ENCODE measurements at regions of chr3 and their contacts with region 1.

Region 1: DNA sequence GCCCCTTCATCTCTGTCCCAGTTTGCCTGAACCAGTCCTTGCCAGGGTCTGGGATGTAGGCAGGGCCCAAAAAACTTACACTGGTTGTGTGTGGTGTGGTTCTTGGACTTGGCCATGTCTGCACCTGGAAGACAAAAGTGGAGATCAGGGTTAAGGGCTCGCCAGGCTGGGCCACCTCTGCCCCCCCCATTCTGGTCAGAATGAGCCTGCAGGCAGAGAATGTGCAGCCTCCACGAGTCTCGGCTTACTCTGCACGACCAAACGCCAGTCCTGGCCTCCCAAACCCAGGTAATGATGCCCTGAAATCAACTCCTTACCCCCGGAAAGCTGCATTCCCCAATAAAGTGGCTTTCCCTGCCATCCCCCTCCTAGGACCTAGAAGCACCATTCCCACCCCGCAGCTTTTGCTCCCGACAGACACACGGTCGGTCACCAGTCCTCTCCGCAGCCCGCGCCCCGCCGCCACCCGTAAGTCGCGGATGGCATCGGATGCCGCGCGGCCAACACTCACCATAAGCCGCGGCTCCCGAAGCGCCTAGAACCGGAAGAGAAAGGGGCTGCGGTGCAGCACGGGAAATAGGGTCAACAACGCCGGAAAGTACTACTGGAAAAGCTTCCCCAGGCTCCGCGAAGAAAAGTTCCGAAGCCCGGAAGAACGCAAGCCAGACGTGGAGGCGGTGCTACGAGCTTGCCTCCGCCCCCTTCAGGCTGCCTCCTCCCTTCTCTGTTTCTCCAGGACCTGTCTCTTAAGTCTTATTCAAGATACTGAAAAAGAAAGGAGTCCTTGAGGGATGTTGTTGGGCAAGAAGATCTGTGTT is at the start of gene RPL29:
- DNase-seq: peak; percentile 88 to 94 (median 94)
- H3K4me3 ChIP-seq: peak within 1 kb of the TSS; percentile 60
- H3K27ac ChIP-seq: peak within 1 kb of the TSS; percentile 71 to 74
- H3K4me1 ChIP-seq: peaks cover 6% of the 10 kb centered on the region
- H3K27me3 ChIP-seq: no peaks in the 10 kb centered on the region
- CTCF ChIP-seq: peak; percentile 20 to 42 (median 29)
- EP300 ChIP-seq: no peak
- POLR2A ChIP-seq: peak; percentile 76
- total RNA-seq, gene RPL29: 1,785 to 3,905 (median 1,999) TPM

Region 2: DNA sequence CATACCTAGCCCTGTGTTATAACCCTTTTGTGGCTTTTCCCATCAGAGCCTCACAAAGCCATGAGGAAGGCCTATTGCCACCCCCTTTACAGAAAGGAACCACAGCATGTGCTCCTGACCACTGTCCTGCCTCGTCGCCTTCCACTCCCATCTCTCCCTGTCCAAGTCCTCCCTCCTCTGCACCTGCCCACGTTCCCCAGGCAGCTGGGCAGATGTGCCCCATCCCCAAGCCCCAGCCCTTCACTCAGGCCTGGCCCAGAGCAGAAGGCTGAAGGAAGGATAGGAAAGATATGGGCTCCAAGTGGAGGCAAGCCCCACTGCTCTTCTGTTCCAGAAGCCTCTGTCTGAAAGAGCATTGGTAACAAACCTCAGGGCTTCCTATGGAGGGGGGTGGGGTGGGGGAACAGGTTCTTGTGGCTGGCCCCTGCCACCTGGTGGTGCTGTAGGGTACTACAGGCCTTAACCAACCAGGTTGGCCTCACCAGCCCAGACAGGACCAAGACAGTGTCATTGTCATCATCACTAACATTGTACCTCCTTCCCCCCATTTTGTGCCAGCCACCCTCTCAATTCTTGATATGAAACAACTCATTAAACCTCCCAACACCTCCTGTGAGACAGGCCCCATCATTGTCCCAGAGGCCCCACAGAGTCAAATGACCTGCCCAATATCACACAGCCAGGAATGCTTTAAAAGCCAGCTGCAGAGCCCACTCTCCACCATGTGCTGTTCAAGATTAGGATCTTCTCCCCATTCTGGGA is 148.7 kb after region 1 on chr3:
- intact Hi-C with region 1: loop called in 3 of 4 experiments (anchors 2 to 5 kb)
- DNase-seq: peak; percentile 79 to 89 (median 86)
- H3K4me3 ChIP-seq: no peak overlapping the region
- H3K27ac ChIP-seq: no peak overlapping the region
- H3K4me1 ChIP-seq: no peaks in the 10 kb centered on the region
- H3K27me3 ChIP-seq: no peaks in the 10 kb centered on the region
- CTCF ChIP-seq: peak; percentile 80 to 96 (median 95)
- EP300 ChIP-seq: no peak
- POLR2A ChIP-seq: peak; percentile 35